H1 (cell line): ENCODE measurements at regions of chr7 and their contacts with region 1.

Region 1: DNA sequence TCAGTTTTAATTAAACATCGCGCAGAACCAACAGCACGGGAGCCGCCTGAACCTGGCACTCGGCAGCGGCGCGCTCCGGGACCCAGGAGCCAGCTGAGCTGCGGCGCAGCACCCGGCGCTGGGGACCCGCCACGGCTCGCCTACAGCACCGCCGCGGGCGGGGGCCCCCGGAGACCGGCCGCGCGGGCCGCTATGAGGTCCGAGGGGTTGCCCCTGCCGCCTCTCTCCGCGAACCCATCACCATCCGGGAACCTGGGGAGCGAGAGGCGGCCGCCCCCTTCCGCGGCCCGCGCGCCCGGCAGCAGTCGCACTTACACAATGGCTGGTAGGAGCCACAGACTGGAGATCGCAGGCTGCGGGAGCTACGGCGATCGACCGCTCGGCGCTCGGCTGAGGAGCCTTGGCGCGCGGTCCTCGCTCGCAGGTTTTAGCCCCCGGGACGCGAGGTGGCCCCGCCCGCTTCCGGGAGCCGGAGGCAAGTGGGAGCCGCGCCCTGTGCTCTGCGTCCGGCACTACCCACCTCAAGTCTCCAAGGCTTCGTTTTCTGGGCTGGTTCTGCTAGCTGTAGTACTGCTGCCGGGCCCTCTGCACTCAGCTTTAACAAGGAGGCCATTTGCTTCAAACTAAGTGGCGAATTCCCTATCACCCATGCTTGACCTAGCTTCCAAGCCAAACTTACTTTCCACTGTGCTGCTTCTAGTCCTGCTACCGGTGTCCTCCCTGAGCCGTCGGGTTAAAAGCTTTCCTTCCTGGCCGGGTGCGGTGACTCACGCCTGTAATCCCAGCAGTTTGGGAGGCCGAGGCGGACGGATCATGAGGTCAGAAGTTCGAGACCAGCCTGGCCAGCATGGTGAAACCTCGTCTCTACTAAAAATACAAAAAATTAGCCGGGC is at the start of gene TPK1:
- DNase-seq: peak; percentile 84 to 89
- H3K4me3 ChIP-seq: peak within 1 kb of the TSS; percentile 80 to 88 (median 84)
- H3K27ac ChIP-seq: peak within 1 kb of the TSS; percentile 62; the same call in 1 of the 2 replicates
- H3K4me1 ChIP-seq: peaks cover 0 to 5% (median 2%) of the 10 kb centered on the region in 4 experiments; a peak in 2 of 7 replicates
- H3K27me3 ChIP-seq: no peaks in the 10 kb centered on the region; a peak in 2 of 7 replicates
- CTCF ChIP-seq: no peak
- EP300 ChIP-seq: peak in 1 of 2 experiments; percentile 53; a peak in 1 of 3 replicates
- POLR2A ChIP-seq: peak; percentile 73 to 86
- RAD21 ChIP-seq: no peak; a peak in 1 of 4 replicates
- total RNA-seq, gene TPK1: 1.8 and 2.7 TPM in 2 replicates

Region 2: GRCh38 chr7:144854839-144855424 is 19.0 kb after region 1 on chr7:
- CTCF ChIA-PET with region 1: interaction called, 10 read pairs
- POLR2A ChIA-PET with region 1: interaction called, 4 read pairs
- DNase-seq: no peak
- H3K4me3 ChIP-seq: no peak overlapping the region
- H3K27ac ChIP-seq: no peak overlapping the region
- H3K4me1 ChIP-seq: 0 out of 7 replicates have a peak, but pooled peaks cover 0 to 2% (median 0%) of the 10 kb centered on the region in 4 experiments
- H3K27me3 ChIP-seq: no peaks in the 10 kb centered on the region
- CTCF ChIP-seq: peak in 2 of 3 experiments; percentile 46 to 49; a peak in 3 of 4 replicates
- EP300 ChIP-seq: no peak
- POLR2A ChIP-seq: no peak
- RAD21 ChIP-seq: peak; percentile 81

Region 3: DNA sequence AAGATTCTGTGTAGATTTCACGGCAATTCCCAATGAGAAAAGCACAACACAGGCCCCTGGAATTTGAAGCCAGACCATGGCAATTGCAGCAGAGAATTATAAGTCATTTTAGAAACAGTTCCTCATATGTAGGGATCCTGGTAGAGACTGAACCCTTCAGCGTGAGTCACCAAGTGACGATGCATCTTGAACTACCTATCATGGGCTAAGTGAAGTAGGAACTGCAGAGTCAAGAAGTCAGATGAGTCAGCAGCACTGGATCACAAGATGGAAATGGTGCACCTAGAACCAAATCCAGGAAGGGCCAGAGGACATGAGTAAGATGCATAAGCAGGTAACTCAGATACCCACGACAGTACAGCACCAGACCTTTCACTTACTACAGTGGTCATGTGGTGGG is 140.0 kb after region 1 on chr7:
- CTCF ChIA-PET with region 1: no interaction called
- POLR2A ChIA-PET with region 1: no interaction called
- DNase-seq: no peak
- H3K4me3 ChIP-seq: no peak overlapping the region
- H3K27ac ChIP-seq: no peak overlapping the region
- H3K4me1 ChIP-seq: no peaks in the 10 kb centered on the region
- H3K27me3 ChIP-seq: no peaks in the 10 kb centered on the region
- CTCF ChIP-seq: no peak
- EP300 ChIP-seq: no peak
- POLR2A ChIP-seq: no peak
- RAD21 ChIP-seq: no peak